Left lung (tissue), 14 donors: ENCODE measurements at regions of chr3 and their contacts with region 1.

Region 1: GRCh38 chr3:171187706-171188290 is 161.3 kb upstream of the SLC2A2 start:
- DNase-seq: peak in 1 of 4 donors; percentile 47
- ATAC-seq: peak; percentile 90
- H3K4me3 ChIP-seq: no peak overlapping the region
- H3K27ac ChIP-seq: no peak overlapping the region
- H3K4me1 ChIP-seq: peaks cover 0 to 3% of the 10 kb centered on the region in 2 donors
- H3K27me3 ChIP-seq: no peaks in the 10 kb centered on the region
- CTCF ChIP-seq: peak; percentile 36 to 50

Region 2: DNA sequence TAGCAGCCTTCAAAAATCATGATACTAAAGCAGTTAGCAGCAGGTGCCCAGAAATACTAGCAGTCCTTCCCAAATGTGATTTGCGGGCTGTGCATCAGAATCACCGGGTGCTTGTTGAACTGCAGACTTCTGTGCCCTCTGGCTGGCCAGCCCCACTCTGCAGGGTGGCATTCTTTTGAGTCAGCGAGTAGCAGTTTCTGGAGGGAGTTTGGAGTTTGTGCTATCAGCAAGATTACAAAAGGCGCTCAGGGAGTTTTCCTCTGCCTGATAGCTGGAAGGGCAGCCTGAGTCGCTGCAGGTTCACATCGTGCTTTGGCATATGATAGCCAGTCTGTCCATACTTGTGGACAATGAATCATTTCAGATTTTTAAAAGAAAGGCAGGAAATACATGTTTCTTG is 711.5 kb before region 1 on chr3:
- intact Hi-C with region 1: no loop called
- DNase-seq: no peak
- ATAC-seq: no peak
- H3K4me3 ChIP-seq: no peak overlapping the region
- H3K27ac ChIP-seq: no peak overlapping the region
- H3K4me1 ChIP-seq: no peaks in the 10 kb centered on the region
- H3K27me3 ChIP-seq: no peaks in the 10 kb centered on the region
- CTCF ChIP-seq: no peak

Region 3: DNA sequence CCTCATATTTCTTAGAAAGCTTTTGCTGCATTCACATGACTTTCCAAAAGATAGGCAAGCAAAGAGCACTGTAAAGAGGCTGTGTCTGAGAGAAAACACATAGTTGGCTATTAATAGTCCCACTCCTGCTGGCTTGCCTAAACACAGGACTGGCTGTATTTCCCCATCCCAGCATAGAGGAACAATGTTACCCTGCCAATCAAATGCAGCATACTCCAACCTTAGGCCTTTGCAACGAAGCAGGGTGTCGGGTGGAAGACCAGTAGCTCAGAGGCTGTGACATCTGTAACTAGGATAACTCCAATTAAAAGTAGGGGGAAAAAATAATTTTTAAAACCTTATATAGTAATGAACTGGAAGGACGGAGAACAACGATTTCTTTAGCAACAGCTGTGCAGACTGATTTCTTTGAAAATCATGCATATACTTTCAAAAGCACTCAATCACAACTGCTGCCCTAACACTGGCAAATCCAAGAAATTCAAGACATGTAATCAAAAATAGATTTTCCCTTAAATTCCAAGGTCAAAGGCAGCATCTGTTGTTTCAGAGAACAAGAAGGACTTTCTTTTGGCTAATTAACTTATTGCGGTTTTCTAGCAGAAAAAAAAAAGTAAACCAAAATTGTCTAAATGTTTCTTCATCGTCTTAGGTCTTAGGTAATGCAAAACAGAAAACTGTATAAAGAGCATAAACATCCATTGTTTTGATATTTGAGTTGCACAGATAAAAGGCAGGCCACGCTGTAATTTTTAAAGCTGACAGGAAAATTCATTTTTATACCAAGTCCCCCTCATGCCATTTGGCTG is 133.2 kb after region 1 on chr3:
- intact Hi-C with region 1: no loop called
- DNase-seq: peak in 2 of 4 donors; percentile 56 to 62
- ATAC-seq: peak; percentile 96
- H3K4me3 ChIP-seq: no peak overlapping the region
- H3K27ac ChIP-seq: peak overlapping the region in 1 of 2 donors; percentile 23
- H3K4me1 ChIP-seq: no peaks in the 10 kb centered on the region
- H3K27me3 ChIP-seq: no peaks in the 10 kb centered on the region
- CTCF ChIP-seq: no peak

Region 4: DNA sequence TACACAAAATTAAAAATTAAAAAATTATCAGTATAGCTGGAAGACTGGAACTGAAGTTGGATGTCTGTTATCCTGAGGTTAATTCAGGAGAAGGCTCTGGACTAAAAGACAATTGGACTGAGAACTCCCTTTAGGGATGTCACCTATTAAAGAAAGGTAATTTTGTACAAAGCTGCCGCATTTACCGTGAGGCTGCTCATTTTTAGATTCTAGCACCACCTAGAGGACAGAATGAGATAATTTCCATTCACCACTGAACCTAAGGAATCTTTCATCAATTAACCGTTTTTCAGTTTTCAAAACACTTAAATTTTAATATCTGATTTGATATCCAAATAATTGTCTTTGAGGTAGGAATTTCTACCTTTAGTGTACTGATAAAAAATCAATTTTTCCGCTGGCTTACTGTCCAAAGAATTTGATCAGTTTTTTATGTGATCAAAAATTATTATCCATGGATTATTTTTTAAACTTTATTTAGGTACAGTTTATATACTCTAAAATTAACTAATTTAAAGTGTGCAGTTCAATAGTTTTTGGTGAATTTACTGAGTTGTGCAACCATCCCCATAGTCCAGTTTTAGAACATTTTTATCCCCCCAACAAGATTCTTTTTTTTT is 379.1 kb after region 1 on chr3:
- intact Hi-C with region 1: loop called in 1 of 2 experiments (anchors 10 kb)
- DNase-seq: peak in 2 of 4 donors; percentile 25 to 43
- ATAC-seq: peak; percentile 83
- H3K4me3 ChIP-seq: no peak overlapping the region
- H3K27ac ChIP-seq: no peak overlapping the region
- H3K4me1 ChIP-seq: peaks cover 9 to 27% of the 10 kb centered on the region in 2 donors
- H3K27me3 ChIP-seq: no peaks in the 10 kb centered on the region
- CTCF ChIP-seq: peak; percentile 74